ENCODE measurements at regions of chr3 and their contacts with region 1.

Region 1: DNA sequence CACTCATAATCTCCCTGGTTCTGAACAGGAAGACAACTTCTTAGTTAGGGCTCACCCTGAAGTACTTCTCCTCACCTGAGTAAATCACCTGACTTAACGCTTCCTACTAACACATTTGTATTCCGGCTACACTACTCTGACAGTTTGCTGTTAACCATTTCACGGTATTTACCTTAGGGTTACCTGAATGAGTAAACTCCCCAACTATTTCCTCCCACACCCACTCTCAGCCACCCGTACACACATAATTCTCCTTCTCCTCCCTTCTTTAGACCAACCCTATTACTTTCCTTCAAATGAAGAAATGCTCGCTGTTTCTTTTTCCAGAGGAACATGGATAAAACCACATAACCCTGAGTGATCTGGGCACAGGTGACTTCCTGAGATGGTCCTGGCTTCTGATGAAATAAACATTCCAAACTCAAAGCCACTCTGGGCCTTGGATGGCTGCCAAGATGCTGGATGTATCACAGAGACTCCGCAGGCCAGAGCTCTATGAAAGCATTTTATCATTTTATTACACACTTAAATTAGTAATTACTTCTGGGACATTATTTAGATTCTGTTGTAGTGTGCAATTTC is 183.6 kb upstream of the ATP11B start:
- DNase-seq: no peak
- ATAC-seq: no peak
- H3K4me3 ChIP-seq: no peak overlapping the region
- H3K27ac ChIP-seq: no peak overlapping the region
- H3K4me1 ChIP-seq: no peaks in the 10 kb centered on the region
- H3K27me3 ChIP-seq: no peaks in the 10 kb centered on the region
- CTCF ChIP-seq: no peak
- EP300 ChIP-seq: no peak
- POLR2A ChIP-seq: no peak
- RAD21 ChIP-seq: no peak

Region 2: DNA sequence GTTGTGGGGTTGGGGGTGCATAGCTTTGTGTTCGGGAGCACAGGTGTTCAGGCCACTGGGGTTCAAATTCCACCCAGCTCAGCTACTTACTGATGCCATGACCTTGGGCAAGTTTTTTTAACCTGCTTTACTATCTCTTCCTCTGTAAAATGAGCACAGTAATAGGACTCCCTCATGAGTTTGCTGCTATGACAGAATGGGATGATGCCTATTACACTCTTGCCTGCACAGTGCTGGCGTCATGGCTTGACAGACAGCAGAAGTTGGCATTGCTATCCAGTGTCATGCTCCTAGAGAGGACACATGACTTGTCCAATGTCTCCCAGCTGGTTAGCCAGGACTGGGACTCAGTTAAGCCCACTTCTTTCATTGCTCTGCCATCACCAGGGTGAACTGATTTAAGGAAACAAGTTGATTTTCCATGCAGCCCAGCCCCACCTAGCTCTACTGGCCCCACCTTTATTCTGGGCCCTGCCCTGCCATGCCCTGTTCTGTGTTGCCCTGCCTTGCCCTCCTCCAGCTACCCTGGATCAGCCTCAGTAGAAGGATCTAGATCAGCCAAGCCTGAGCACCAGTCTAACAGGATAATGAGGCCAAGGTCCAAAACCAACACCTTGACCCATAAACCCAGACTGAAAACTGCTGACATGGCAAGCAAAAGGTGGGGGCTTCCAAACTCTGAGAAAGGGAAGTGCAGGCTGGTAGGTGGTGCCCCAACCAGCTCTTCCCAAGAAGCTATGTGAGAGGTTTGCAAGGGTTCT is 27.9 kb after region 1 on chr3:
- CTCF ChIA-PET with region 1: no interaction called
- POLR2A ChIA-PET with region 1: no interaction called
- in situ Hi-C with region 1: no loop called
- intact Hi-C with region 1: loop called (anchors 1 kb)
- DNase-seq: no peak
- ATAC-seq: no peak
- H3K4me3 ChIP-seq: no peak overlapping the region
- H3K27ac ChIP-seq: no peak overlapping the region
- H3K4me1 ChIP-seq: no peaks in the 10 kb centered on the region
- H3K27me3 ChIP-seq: no peaks in the 10 kb centered on the region
- CTCF ChIP-seq: no peak
- EP300 ChIP-seq: no peak
- POLR2A ChIP-seq: no peak
- RAD21 ChIP-seq: no peak